B cell (primary cell): ENCODE measurements at regions of chr3 and their contacts with region 1.

Region 1: GRCh38 chr3:30475038-30475808 is 131.2 kb upstream of the TGFBR2 start:
- DNase-seq: peak; percentile 73
- ATAC-seq: peak; percentile 93
- H3K4me3 ChIP-seq: peak overlapping the region in 1 of 5 experiments; percentile 21
- H3K4me3 Mint-ChIP-seq: peak overlapping the region; percentile 69
- H3K27ac ChIP-seq: peak overlapping the region in 1 of 2 donors; percentile 53
- H3K27ac Mint-ChIP-seq: peak overlapping the region; percentile 75
- H3K4me1 ChIP-seq: peaks cover 51 to 55% of the 10 kb centered on the region in 2 donors
- H3K4me1 Mint-ChIP-seq: peaks cover 60% of the 10 kb centered on the region
- H3K27me3 ChIP-seq: no peaks in the 10 kb centered on the region
- H3K27me3 Mint-ChIP-seq: no peaks in the 10 kb centered on the region
- CTCF ChIP-seq: no peak

Region 2: GRCh38 chr3:30437171-30437601 is 38.0 kb before region 1 on chr3:
- CTCF ChIA-PET with region 1: interaction called, 3 read pairs
- POLR2A ChIA-PET with region 1: no interaction called
- intact Hi-C with region 1: loop called (anchors 5 kb)
- DNase-seq: no peak
- ATAC-seq: no peak
- H3K4me3 ChIP-seq: no peak overlapping the region
- H3K4me3 Mint-ChIP-seq: no peak overlapping the region
- H3K27ac ChIP-seq: no peak overlapping the region
- H3K27ac Mint-ChIP-seq: no peak overlapping the region
- H3K4me1 ChIP-seq: peaks cover 28 to 42% of the 10 kb centered on the region in 2 donors
- H3K4me1 Mint-ChIP-seq: peaks cover 37% of the 10 kb centered on the region
- H3K27me3 ChIP-seq: no peaks in the 10 kb centered on the region
- H3K27me3 Mint-ChIP-seq: no peaks in the 10 kb centered on the region
- CTCF ChIP-seq: no peak

Region 3: DNA sequence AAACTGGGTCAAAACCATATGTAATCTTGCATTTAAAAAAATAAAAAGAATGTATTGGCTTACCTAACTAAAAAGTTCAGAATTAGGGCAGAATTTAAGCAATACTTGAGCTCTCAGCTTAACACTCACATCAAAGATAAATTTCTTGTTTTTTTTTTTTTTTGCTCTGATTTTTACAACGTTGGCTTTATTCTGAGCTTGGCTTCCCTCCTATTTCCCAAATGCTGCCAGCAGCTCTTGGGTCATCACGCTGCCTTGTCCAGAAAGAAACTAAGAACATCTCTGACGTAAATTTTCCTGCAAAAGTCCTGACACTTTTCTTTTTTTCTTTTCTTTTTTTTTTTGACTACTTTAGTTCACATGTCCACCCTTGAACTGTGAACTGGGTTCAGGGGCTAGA is 19.4 kb before region 1 on chr3:
- CTCF ChIA-PET with region 1: no interaction called
- POLR2A ChIA-PET with region 1: no interaction called
- intact Hi-C with region 1: loop called (anchors 1 kb)
- DNase-seq: no peak
- ATAC-seq: no peak
- H3K4me3 ChIP-seq: no peak overlapping the region
- H3K4me3 Mint-ChIP-seq: no peak overlapping the region
- H3K27ac ChIP-seq: no peak overlapping the region
- H3K27ac Mint-ChIP-seq: no peak overlapping the region
- H3K4me1 ChIP-seq: no peaks in the 10 kb centered on the region
- H3K4me1 Mint-ChIP-seq: no peaks in the 10 kb centered on the region
- H3K27me3 ChIP-seq: no peaks in the 10 kb centered on the region
- H3K27me3 Mint-ChIP-seq: no peaks in the 10 kb centered on the region
- CTCF ChIP-seq: no peak

Region 4: DNA sequence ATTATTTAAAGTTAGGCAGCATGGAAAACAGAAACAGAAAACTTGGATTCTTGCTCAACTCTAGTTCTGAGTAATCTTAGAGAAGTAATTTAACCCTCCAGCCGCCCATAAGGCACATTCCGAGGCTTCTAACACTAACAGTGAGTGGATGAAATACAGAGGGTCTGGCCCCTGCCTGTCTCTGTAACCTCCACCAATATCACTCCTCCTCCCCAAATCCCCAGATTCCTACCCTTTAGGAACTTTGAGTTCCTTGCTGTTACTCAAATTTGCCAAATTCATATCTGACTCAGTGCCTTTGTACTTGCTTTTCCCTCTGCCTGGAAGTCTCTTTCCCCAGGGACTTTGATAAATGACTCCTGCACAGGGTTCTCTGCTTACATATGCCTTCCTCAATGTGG is 18.7 kb after region 1 on chr3:
- CTCF ChIA-PET with region 1: interaction called, 4 read pairs
- POLR2A ChIA-PET with region 1: no interaction called
- intact Hi-C with region 1: loop called (anchors 2 kb)
- DNase-seq: no peak
- ATAC-seq: no peak
- H3K4me3 ChIP-seq: no peak overlapping the region
- H3K4me3 Mint-ChIP-seq: no peak overlapping the region
- H3K27ac ChIP-seq: no peak overlapping the region
- H3K27ac Mint-ChIP-seq: peak overlapping the region; percentile 33
- H3K4me1 ChIP-seq: peaks cover 16 to 21% of the 10 kb centered on the region in 2 donors
- H3K4me1 Mint-ChIP-seq: peaks cover 31% of the 10 kb centered on the region
- H3K27me3 ChIP-seq: no peaks in the 10 kb centered on the region
- H3K27me3 Mint-ChIP-seq: no peaks in the 10 kb centered on the region
- CTCF ChIP-seq: no peak